Ascending aorta (tissue), 2 donors: ENCODE measurements at regions of chr16 and their contacts with region 1.

Region 1: DNA sequence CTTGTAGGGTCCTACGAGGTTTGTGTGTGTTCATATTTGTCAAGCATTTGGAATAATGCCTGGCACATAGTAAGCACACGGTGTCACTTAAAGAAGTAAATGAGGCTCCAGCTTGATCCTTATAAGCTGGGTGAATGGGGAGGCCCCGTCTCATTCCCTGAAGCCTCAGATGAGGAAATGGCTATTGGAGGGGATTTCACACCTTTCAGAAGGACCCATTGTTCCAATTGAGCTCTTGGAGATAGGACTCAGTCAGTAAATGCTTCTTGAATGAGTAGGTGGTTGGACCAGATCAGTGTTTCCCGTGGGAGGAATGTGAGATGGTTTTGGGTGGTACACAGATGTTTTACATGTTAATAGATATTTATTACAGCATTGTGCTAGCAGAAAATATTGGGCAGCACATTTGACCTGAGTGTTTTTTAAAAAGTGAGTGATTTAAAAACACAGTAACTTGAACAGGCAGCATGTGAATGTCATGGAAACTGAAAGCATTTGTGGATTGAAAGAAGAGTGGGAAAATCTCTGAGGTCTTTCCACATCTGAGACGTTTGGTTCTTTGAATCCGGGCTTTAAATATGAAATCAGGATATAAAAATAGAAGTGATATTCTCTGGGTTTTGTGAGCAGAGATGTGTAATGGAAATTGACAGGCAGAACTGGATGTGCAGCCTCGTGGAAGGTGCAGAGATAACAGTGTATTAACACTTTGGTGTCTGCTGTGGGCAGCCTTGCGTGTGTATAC is 36.4 kb upstream of the ARHGAP17 start:
- DNase-seq: no peak
- H3K4me3 ChIP-seq: peak overlapping the region; percentile 33 to 38
- H3K27ac ChIP-seq: peak overlapping the region; percentile 61 to 67
- H3K4me1 ChIP-seq: peaks cover 0 to 24% of the 10 kb centered on the region in 2 donors
- H3K27me3 ChIP-seq: no peaks in the 10 kb centered on the region
- CTCF ChIP-seq: no peak

Region 2: GRCh38 chr16:25031441-25032307 is 19.9 kb before region 1 on chr16:
- intact Hi-C with region 1: loop called (anchors 2 kb)
- DNase-seq: peak; percentile 76 to 94
- H3K4me3 ChIP-seq: peak overlapping the region; percentile 79 to 93
- H3K27ac ChIP-seq: peak overlapping the region; percentile 44 to 70
- H3K4me1 ChIP-seq: peaks cover 0 to 9% of the 10 kb centered on the region in 2 donors
- H3K27me3 ChIP-seq: no peaks in the 10 kb centered on the region
- CTCF ChIP-seq: no peak

Region 3: DNA sequence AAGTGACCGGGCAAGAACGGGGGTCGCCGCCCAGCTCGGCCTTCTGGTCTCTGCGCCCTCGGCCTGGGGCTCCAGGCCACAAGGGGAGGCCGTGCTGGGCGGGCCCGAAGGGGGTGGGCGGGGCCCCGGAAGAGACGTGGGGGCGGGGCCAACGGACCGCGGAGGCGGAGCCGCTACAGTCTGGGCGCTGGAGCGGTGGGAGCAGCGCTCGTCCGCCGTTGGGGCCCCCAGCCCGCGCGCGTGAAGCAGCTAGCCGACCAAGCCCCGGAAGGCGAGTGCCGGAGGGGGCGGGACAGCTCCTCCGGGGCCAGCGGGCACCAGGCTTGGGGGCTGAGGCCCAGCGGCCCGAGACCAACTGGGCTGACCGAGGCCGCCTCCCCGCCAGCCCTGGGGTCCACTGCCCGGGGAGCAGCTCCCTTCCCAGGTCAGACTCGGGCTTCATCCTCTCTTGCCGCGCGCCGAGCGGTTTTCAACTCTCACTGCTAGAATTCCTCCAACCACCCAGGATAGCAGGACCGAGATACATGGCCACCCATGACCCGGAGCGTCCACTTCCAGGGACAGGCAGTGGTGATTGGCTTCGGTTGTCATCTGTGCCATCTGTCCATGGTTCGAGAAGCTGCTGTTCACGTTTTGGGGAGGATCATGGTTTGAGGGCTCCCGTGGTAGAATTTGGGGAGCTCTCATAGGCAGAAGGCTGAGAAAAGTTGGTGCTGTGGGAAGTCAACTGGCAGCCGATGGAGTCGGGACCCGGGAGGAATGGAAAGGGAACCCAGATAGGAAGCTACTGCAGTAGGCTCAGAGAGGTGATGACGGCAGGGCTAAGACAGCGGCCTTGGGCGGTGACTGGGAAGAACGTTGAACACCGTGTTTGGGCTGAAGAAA is 15.4 kb after region 1 on chr16:
- intact Hi-C with region 1: loop called (anchors 2 kb)
- DNase-seq: peak; percentile 20 to 89
- H3K4me3 ChIP-seq: peak overlapping the region; percentile 74 to 78
- H3K27ac ChIP-seq: peak overlapping the region; percentile 87 to 97
- H3K4me1 ChIP-seq: peaks cover 0 to 8% of the 10 kb centered on the region in 2 donors
- H3K27me3 ChIP-seq: no peaks in the 10 kb centered on the region
- CTCF ChIP-seq: peak in 1 of 3 experiments; percentile 5

Region 4: GRCh38 chr16:25126820-25127232 is 75.2 kb after region 1 on chr16:
- intact Hi-C with region 1: loop called (anchors 1 kb)
- DNase-seq: no peak
- H3K4me3 ChIP-seq: no peak overlapping the region
- H3K27ac ChIP-seq: no peak overlapping the region
- H3K4me1 ChIP-seq: no peaks in the 10 kb centered on the region
- H3K27me3 ChIP-seq: no peaks in the 10 kb centered on the region
- CTCF ChIP-seq: peak in 2 of 3 experiments; percentile 11 to 37

Region 5: GRCh38 chr16:25224731-25225319 is 173.2 kb after region 1 on chr16:
- intact Hi-C with region 1: loop called (anchors 5 kb)
- DNase-seq: no peak
- H3K4me3 ChIP-seq: no peak overlapping the region
- H3K27ac ChIP-seq: no peak overlapping the region
- H3K4me1 ChIP-seq: peaks cover 0 to 4% of the 10 kb centered on the region in 2 donors
- H3K27me3 ChIP-seq: no peaks in the 10 kb centered on the region
- CTCF ChIP-seq: no peak

Region 6: DNA sequence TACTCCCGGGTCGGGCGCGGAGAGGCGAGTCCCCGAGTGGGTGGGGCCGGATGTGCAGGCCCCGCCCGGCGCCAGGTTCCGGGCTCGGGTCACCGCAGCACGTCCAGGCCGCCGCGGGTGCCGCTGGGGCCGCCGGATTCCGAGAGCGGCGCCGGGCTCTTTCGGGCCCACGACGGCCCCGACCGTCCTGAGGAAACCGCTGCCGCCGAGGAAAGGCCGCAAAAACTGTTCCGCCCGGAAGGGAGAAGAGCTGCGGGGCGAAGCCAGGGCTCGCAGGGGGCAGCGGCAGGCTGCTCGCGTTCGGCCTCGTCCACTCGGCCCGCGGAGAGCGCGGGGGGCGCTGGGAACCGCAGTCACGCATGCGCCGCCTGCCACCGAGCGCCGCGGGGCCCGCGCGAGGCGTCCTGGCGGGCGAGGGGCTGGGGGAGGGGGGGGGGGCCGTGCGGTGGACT is 206.0 kb after region 1 on chr16 and contains the start of gene ZKSCAN2:
- intact Hi-C with region 1: loop called (anchors 10 kb)
- DNase-seq: peak; percentile 63 to 93
- H3K4me3 ChIP-seq: peak within 1 kb of the TSS; percentile 70 to 92
- H3K27ac ChIP-seq: peak within 1 kb of the TSS; percentile 91 to 98
- H3K4me1 ChIP-seq: peaks cover 7 to 20% of the 10 kb centered on the region in 2 donors
- H3K27me3 ChIP-seq: no peaks in the 10 kb centered on the region
- CTCF ChIP-seq: no peak
- total RNA-seq, gene ZKSCAN2: 3.1 TPM